ENCODE measurements at regions of chr1 and their contacts with region 1.

Region 1: DNA sequence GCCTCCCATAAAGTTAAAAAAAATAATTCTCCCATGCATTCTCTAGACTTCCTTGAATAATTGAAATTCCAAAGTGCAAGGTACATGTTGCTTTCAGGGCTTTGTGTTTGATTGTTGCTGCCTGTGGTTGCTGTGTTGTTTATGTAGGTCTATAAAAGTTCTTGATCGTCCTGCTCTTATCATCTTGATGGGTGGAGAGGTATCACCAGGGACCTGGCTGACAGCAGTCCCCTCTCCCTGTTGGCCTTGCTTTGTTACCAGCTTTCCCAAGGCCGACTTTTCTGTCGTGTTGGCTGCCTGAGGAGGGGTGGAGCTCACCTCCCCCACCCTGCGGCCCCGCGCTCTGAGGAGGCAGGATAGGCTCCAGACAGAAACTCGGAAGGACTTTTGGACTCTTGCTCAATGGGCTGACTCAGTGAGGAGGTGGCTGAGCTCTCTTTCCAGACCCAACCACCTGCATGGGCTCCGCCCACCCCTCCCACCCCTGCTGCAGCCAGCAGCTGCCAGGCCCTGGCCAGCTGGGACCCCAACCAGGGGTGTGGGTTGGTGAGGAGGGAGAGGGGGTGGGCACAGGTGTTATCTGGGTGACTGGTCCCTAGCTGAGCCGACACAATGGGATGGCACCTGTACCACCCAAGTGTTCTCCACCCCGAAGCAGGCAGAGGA is 2.0 kb downstream of the INAVA start:
- DNase-seq: peak; percentile 93
- ATAC-seq: peak; percentile 46
- H3K4me3 ChIP-seq: peak overlapping the region; percentile 15 to 76 (median 61); a peak in 5 of 6 replicates
- H3K27ac ChIP-seq: peak overlapping the region; percentile 79
- H3K4me1 ChIP-seq: peaks cover 88% of the 10 kb centered on the region
- H3K27me3 ChIP-seq: no peaks in the 10 kb centered on the region
- CTCF ChIP-seq: no peak
- EP300 ChIP-seq: peak; percentile 57 to 85; a peak in 3 of 4 replicates
- POLR2A ChIP-seq: peak in 1 of 2 experiments; percentile 62; a peak in 2 of 4 replicates
- RAD21 ChIP-seq: no peak

Region 2: GRCh38 chr1:200907611-200908097 is 11.0 kb after region 1 on chr1:
- CTCF ChIA-PET with region 1: interaction called, 14 read pairs
- POLR2A ChIA-PET with region 1: interaction called, 129 read pairs
- in situ Hi-C with region 1: no loop called
- intact Hi-C with region 1: loop called (anchors 1 kb)
- DNase-seq: peak; percentile 90
- ATAC-seq: peak; percentile 90
- H3K4me3 ChIP-seq: no peak overlapping the region
- H3K27ac ChIP-seq: no peak overlapping the region
- H3K4me1 ChIP-seq: peaks cover 52% of the 10 kb centered on the region
- H3K27me3 ChIP-seq: no peaks in the 10 kb centered on the region
- CTCF ChIP-seq: peak; percentile 37
- EP300 ChIP-seq: peak in 1 of 2 experiments; percentile 63; a peak in 1 of 4 replicates
- POLR2A ChIP-seq: no peak
- RAD21 ChIP-seq: no peak

Region 3: DNA sequence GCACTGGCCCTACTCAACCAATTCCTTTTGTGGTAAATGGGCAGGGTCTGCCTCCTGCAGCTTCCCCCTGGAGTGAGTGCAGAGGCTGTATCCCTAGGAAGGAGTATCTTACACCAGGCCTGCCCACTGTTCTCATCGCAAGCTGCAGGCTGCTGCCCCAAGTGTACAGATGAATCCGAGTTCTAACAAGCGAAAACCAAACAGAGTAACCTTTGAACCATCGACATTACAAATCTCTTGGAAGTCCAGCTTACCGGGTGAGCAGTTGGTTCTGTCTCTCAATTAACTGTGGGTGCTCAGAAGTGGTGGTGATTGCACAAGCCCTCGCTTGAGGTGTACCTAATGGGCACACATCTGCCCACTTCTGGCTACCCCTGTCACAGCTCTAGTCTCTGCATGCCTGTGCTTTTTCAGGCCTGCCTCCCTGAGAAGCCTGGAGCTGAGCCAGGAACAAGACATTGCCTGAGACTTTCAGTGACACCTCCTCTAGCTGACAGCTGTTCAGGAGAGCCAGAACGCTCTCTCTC is 20.7 kb after region 1 on chr1:
- CTCF ChIA-PET with region 1: no interaction called
- POLR2A ChIA-PET with region 1: interaction called, 10 read pairs
- in situ Hi-C with region 1: no loop called
- intact Hi-C with region 1: no loop called
- DNase-seq: peak; percentile 67
- ATAC-seq: peak; percentile 88
- H3K4me3 ChIP-seq: peak overlapping the region in 1 of 3 experiments; percentile 41; a peak in 2 of 6 replicates
- H3K27ac ChIP-seq: no peak overlapping the region
- H3K4me1 ChIP-seq: peaks cover 27% of the 10 kb centered on the region
- H3K27me3 ChIP-seq: no peaks in the 10 kb centered on the region
- CTCF ChIP-seq: peak; percentile 22; the same call in 1 of the 2 replicates
- EP300 ChIP-seq: no peak
- POLR2A ChIP-seq: no peak
- RAD21 ChIP-seq: no peak; the same call in 1 of the 2 replicates